H1 (cell line): ENCODE measurements at regions of chr9 and their contacts with region 1.

Region 1: DNA sequence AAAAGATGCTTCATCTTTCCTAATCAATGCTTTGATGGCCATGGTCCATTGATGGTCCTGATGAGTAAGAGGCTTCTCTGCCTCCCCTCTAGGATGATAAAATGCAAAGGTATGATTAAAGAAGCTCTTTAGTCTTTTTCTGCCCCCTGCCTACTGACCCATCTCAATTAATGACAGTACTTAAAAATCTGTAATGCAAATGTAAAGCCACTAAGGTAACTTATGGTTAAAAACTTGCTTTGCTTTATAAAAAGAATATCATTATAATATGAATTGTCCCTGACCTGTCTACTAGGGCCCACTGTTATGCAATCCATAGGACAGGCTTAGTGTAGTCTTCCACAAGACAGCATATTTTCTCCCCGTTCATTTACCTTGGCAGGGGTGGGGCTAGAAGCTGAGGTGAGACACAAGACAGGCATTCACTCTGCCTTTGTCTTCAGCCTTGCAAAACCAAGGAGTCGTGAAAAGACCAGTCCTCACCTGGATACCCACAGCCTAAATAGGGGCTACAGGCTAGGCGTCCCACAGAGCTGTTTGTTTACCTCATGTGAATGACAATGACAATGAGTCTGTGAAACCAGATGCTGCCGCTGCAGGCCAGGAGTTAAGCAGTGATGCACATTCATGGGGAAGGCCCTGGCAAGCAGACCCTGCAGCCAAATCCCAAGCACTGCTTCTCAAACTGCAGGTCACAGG is 60.4 kb downstream of the BNC2 start:
- DNase-seq: peak; percentile 79 to 96
- H3K4me3 ChIP-seq: no peak overlapping the region
- H3K27ac ChIP-seq: peak overlapping the region; percentile 67
- H3K4me1 ChIP-seq: peaks cover 9 to 29% (median 16%) of the 10 kb centered on the region in 4 experiments; a peak in 6 of 7 replicates
- H3K27me3 ChIP-seq: no peaks in the 10 kb centered on the region
- CTCF ChIP-seq: no peak
- EP300 ChIP-seq: peak in 1 of 2 experiments; percentile 98; a peak in 2 of 3 replicates
- POLR2A ChIP-seq: peak; percentile 48 to 50; a peak in 2 of 3 replicates
- RAD21 ChIP-seq: peak; percentile 0 to 16; a peak in 1 of 4 replicates

Region 2: DNA sequence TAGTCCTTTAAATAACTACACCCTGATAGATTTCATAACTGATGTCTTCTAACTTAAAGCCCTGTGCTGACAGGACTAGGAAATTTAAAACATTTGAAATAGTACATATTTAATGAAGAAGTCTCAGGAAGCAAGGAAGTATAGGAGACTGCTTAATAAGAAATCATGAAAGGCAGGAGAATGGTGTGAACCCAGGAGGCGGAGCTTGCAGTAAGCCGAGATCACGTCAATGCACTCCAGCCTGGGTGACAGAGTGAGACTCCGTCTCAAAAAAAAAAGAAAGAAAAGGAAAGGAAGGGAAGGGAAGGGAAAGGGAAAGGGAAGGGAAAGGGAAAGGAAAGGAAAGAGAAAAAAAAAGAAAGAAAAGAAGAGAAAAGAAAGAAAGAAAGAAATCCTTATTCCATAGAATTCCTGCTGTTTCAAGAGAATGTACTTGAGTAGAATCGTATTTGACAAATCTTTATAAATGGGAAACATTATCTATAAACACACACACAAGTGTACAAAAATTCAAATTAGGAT is 13.7 kb before region 1 on chr9:
- CTCF ChIA-PET with region 1: interaction called, 7 read pairs
- POLR2A ChIA-PET with region 1: interaction called, 16 read pairs
- DNase-seq: no peak
- H3K4me3 ChIP-seq: no peak overlapping the region
- H3K27ac ChIP-seq: no peak overlapping the region
- H3K4me1 ChIP-seq: peaks cover 1 to 28% (median 5%) of the 10 kb centered on the region in 4 experiments; a peak in 6 of 7 replicates
- H3K27me3 ChIP-seq: no peaks in the 10 kb centered on the region
- CTCF ChIP-seq: no peak
- EP300 ChIP-seq: no peak
- POLR2A ChIP-seq: no peak
- RAD21 ChIP-seq: no peak

Region 3: GRCh38 chr9:16824545-16825330 is 14.7 kb after region 1 on chr9:
- CTCF ChIA-PET with region 1: interaction called, 10 read pairs
- POLR2A ChIA-PET with region 1: interaction called, 7 read pairs
- DNase-seq: no peak
- H3K4me3 ChIP-seq: no peak overlapping the region
- H3K27ac ChIP-seq: no peak overlapping the region; the same call in 1 of the 2 replicates
- H3K4me1 ChIP-seq: peaks cover 10 to 26% (median 14%) of the 10 kb centered on the region in 4 experiments
- H3K27me3 ChIP-seq: no peaks in the 10 kb centered on the region
- CTCF ChIP-seq: no peak; a peak in 1 of 4 replicates
- EP300 ChIP-seq: no peak
- POLR2A ChIP-seq: no peak
- RAD21 ChIP-seq: peak; percentile 33 to 56; a peak in 2 of 4 replicates

Region 4: GRCh38 chr9:17017931-17018491 is 207.9 kb after region 1 on chr9:
- CTCF ChIA-PET with region 1: no interaction called
- POLR2A ChIA-PET with region 1: no interaction called
- DNase-seq: no peak
- H3K4me3 ChIP-seq: no peak overlapping the region
- H3K27ac ChIP-seq: no peak overlapping the region
- H3K4me1 ChIP-seq: no peaks in the 10 kb centered on the region; a peak in 2 of 7 replicates
- H3K27me3 ChIP-seq: no peaks in the 10 kb centered on the region
- CTCF ChIP-seq: no peak
- EP300 ChIP-seq: no peak
- POLR2A ChIP-seq: no peak
- RAD21 ChIP-seq: no peak